ENCODE measurements at regions of chr5 and their contacts with region 1.

Region 1: GRCh38 chr5:65190328-65191053 is 291.2 kb downstream of the ADAMTS6 start:
- DNase-seq: no peak
- H3K4me3 ChIP-seq: no peak overlapping the region
- H3K27ac ChIP-seq: no peak overlapping the region
- H3K4me1 ChIP-seq: no peaks in the 10 kb centered on the region
- H3K27me3 ChIP-seq: no peaks in the 10 kb centered on the region
- CTCF ChIP-seq: no peak
- EP300 ChIP-seq: no peak
- POLR2A ChIP-seq: no peak

Region 2: DNA sequence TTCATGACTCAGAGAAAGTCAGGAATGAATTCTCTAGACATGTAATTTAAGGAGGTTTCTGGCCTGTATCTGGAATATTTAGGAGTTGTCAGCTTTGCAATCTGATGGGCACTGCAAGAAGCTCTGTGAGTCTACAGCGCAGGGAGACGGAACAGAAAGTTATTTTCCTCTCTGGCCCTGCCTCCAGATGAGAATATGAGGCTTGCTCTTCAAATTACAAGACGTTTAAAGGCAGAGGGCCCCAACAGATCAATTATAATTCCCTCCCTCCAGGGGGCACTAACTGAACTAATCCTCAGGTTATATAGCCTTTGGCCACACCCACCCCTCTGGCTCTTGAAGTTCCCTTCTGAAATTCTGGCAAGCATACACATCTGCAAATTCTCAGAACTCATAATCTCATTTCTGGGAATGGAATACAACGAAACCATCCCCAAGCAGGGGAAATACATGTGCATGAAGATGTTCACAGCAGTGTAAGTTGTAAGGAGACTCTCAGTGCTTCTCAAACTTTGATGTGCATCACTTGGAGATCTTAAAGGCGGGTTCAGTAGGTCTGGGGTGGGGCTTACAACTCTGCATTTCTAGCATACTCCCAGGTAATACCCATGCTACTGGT is 114.1 kb before region 1 on chr5:
- intact Hi-C with region 1: no loop called
- DNase-seq: peak in 4 of 5 donors; percentile 24 to 54 (median 32)
- H3K4me3 ChIP-seq: no peak overlapping the region
- H3K27ac ChIP-seq: no peak overlapping the region
- H3K4me1 ChIP-seq: no peaks in the 10 kb centered on the region
- H3K27me3 ChIP-seq: no peaks in the 10 kb centered on the region
- CTCF ChIP-seq: no peak
- EP300 ChIP-seq: no peak
- POLR2A ChIP-seq: no peak

Region 3: GRCh38 chr5:65144136-65144871 is 46.2 kb before region 1 on chr5:
- intact Hi-C with region 1: loop called in 1 of 4 experiments (anchors 2 kb)
- DNase-seq: no peak
- H3K4me3 ChIP-seq: no peak overlapping the region
- H3K27ac ChIP-seq: no peak overlapping the region
- H3K4me1 ChIP-seq: no peaks in the 10 kb centered on the region
- H3K27me3 ChIP-seq: no peaks in the 10 kb centered on the region
- CTCF ChIP-seq: no peak
- EP300 ChIP-seq: no peak
- POLR2A ChIP-seq: no peak

Measured in ovary (tissue), 10 donors.